Activated naive CD8-positive, alpha-beta T cell treated with anti-CD3 and anti-CD28 coated beads, Interleukin-2, amount 10 ng/mL, durations not matched to agents 7 days and 5 days (primary cell): ENCODE measurements at regions of chr1 and their contacts with region 1.

Region 1: GRCh38 chr1:43934101-43934985 is 742 bp downstream of the ARTN start:
- DNase-seq: peak; percentile 77
- ATAC-seq: peak; percentile 48
- H3K4me3 Mint-ChIP-seq: peak overlapping the region; percentile 42
- H3K27ac Mint-ChIP-seq: no peak overlapping the region
- H3K4me1 Mint-ChIP-seq: peaks cover 10% of the 10 kb centered on the region
- H3K27me3 Mint-ChIP-seq: peaks cover 20% of the 10 kb centered on the region

Region 2: DNA sequence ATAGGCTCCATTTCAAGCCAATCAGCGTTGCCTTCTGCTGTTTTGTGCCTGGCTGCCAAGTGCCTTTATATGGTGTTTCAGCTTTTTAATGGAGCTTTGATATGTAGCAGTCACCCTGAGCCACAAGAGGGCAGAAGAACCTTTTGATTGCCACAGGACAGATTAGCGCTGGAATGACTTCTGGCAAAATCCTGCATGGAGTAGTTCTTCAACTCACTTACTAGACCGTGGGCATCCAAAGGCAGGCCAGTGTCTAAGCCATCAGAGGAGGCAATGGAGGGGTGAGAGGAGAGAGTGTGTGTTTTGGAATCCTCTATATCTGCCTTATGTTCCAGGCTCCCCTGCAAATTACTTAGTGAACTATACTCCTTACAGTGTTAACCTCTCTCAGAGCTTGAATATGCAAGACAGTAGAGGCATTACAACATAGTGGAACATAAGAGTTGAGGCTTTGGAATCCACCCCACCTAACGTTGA is 170.8 kb before region 1 on chr1:
- POLR2A ChIA-PET with region 1: interaction called, 10 read pairs
- DNase-seq: peak; percentile 36
- ATAC-seq: peak; percentile 77
- H3K4me3 Mint-ChIP-seq: no peak overlapping the region
- H3K27ac Mint-ChIP-seq: no peak overlapping the region
- H3K4me1 Mint-ChIP-seq: peaks cover 2% of the 10 kb centered on the region
- H3K27me3 Mint-ChIP-seq: no peaks in the 10 kb centered on the region

Region 3: GRCh38 chr1:43946236-43947060 is 12.1 kb after region 1 on chr1 and contains the start of gene IPO13:
- POLR2A ChIA-PET with region 1: interaction called, 10 read pairs
- DNase-seq: peak; percentile 98
- ATAC-seq: peak; percentile 94
- H3K4me3 Mint-ChIP-seq: peak within 1 kb of the TSS; percentile 93
- H3K27ac Mint-ChIP-seq: peak within 1 kb of the TSS; percentile 90
- H3K4me1 Mint-ChIP-seq: peaks cover 29% of the 10 kb centered on the region
- H3K27me3 Mint-ChIP-seq: no peaks in the 10 kb centered on the region
- total RNA-seq, gene IPO13: 24.1 to 24.4 TPM

Region 4: GRCh38 chr1:43958351-43959255 is 24.3 kb after region 1 on chr1:
- POLR2A ChIA-PET with region 1: no interaction called
- DNase-seq: no peak
- ATAC-seq: no peak
- H3K4me3 Mint-ChIP-seq: no peak overlapping the region
- H3K27ac Mint-ChIP-seq: no peak overlapping the region
- H3K4me1 Mint-ChIP-seq: peaks cover 8% of the 10 kb centered on the region
- H3K27me3 Mint-ChIP-seq: no peaks in the 10 kb centered on the region